RWPE1 (cell line): ENCODE measurements at regions of chr4 and their contacts with region 1.

Region 1: GRCh38 chr4:128060699-128061565 is at the start of gene LARP1B:
- DNase-seq: peak; percentile 94
- H3K27ac ChIP-seq: peak within 1 kb of the TSS; percentile 96
- CTCF ChIP-seq: no peak

Region 2: DNA sequence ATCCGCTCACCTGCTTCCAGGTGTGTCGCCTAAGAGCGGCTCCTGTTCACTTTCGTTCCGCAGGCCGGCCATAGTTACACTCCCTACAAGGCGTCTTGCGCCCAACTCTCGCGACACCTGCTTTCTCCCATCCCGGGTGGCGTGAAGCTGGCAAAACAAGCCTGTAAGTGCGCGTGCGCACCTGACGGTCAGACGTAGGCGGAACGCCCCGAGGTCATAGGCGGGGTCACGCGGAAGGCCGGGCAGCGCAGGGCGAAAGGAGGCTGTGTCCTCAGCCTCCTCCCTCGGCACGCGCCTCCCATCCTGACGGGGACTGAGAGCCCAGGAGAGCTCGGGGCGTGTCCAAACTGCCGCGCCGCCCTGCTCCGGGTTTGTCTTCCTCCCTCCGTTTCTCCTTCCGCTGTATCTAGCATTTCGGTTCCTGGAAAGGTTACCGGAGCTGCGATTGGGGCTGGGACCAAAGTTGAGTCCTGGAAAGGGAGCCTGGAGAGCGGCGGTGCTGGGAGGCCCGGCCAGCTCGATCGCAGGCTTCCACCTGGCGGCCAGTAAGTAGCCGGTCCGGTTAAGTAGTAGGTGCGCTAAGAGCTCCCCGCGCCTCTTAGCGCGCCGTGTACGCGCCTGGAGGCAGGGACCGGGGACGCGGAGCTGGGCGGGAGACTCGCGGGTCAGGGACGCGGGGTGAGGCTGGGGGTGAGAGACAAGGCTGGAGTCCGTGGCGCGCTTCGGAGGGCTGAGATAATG is 95.7 kb before region 1 on chr4 and contains the starts of genes ABHD18 and MFSD8:
- CTCF ChIA-PET with region 1: no interaction called
- POLR2A ChIA-PET with region 1: interaction called, 15 read pairs
- DNase-seq: peak; percentile 96
- H3K27ac ChIP-seq: peak within 1 kb of the TSS; percentile 96
- CTCF ChIP-seq: peak; percentile 21; the same call in 1 of the 2 replicates

Region 3: DNA sequence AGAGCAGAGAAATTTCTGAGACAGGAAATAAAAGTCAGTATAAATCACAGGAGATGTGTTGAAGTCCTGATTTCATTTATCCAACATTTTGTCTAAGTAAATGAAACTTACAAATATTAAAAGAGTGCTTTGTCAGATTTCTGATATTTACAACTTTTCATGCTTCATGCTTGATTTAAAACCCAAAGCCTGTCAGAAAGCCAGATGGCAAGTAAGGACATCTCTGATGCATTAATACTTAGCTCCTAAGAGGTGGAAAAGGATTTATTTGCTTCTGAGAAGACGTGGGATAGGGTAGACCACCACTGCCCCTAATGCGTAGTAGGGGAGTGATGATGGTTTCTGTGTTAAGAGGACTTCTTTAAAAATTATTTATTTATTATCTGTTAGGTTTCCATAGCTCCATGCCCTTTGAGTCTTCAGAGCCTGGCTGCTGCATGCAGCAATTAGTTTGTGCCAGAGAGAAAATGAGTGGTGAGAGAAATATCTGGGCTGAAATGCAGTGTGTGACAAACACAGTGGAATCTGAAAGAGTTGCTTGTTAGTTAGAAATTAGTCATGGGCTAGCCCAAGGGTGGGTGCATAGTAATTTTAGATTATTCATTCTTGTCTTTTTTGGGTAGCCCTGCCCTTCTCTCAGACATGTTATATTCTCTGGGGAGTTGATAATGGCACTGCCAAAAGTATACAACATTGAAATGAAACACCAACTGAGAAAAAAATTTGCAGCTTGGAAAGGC is 1368.8 kb after region 1 on chr4:
- CTCF ChIA-PET with region 1: no interaction called
- POLR2A ChIA-PET with region 1: no interaction called
- DNase-seq: peak; percentile 2
- H3K27ac ChIP-seq: no peak overlapping the region
- CTCF ChIP-seq: no peak